ENCODE measurements at regions of chr2 and their contacts with region 1.

Region 1: DNA sequence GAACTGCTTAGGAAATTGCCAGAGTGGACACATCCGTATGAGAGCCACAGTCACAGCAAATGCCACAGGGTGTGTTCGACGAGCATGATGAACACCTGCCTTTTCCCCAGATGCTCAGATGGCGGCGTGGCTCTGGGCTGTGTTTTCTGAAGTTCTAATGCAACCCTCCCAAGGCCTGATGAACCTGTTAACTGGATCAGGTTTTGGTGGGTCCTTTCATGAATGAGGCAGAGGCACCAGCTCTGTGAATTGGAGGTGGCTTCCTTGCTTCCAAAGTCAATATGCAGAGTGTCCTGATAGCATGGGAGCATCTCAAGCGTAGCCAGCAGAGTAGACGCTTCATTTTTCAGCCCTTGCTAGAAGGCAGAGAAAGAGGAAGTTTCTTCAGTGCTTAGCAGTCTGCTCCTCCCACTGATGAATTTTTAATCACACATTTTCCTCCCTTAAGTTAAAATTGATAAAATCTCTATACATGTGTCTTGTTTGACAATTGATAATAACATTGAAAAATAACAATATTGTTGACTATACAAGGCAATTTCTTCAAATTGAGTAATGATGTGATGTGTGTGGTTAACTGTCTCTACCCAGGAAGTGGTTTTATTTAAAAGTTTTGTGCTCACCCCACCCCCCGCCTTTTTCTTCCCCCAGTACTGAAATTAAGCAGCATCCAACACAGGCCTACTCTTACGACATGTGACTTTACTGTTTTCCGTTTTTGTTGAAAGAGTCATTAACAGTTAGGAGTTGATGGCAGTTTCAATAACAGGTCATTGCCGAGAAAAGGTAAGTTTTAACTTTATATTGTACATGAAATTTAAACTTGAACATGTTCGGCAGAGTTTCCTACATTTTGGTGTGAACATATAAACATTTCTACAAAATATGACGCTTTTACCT is at the start of gene ARHGAP15:
- DNase-seq: peak; percentile 31 to 89 (median 83)
- ATAC-seq: peak; percentile 95
- H3K4me3 ChIP-seq: peak within 1 kb of the TSS; percentile 70
- H3K4me3 Mint-ChIP-seq: peak within 1 kb of the TSS; percentile 76 to 91 (median 82)
- H3K27ac ChIP-seq: peak within 1 kb of the TSS; percentile 84
- H3K27ac Mint-ChIP-seq: peak within 1 kb of the TSS in 5 of 9 donors; percentile 85 to 98 (median 98)
- H3K4me1 ChIP-seq: peaks cover 46 to 52% of the 10 kb centered on the region in 2 donors
- H3K4me1 Mint-ChIP-seq: peaks cover 20 to 39% (median 33%) of the 10 kb centered on the region in 7 donors
- H3K27me3 ChIP-seq: no peaks in the 10 kb centered on the region
- H3K27me3 Mint-ChIP-seq: no peaks in the 10 kb centered on the region
- total RNA-seq, gene ARHGAP15: 164 to 218 (median 183) TPM

Region 2: DNA sequence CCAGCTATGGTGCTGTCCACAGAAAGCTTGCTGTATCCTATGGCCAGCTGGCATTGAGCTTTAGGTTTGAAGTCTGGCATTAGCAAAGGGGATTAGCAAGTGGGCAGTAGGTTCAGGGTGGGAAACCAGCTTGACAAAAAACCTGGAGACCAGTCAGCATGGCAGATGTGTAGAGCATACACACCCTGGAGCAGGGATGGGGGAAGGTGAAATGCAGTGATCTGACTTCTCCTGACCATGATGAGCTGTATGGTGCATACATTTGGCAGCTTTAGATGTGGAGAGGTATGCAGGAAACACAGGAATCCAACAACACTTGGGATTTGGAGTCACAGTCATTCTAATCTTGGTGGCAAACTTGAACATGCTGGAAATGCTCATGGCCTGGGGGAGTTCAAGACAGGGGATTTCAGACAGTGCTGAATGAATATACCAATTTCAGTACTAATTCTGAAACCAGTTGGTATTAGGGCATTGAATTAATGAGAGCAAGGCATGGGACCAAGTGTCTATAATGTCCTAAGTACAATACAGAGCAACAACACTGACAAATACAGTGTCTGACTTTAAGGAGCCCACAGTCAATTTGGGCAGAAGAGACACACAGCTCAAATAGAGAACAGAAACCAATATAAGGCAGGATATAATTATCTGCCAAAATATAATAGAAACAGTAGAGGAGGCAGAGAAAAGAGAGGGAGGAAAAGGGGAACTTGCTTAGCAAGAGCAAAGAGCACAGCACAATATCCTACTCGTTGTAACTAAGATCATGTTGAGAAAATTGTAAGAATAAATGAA is 12.1 kb after region 1 on chr2:
- CTCF ChIA-PET with region 1: interaction called, 9 read pairs
- POLR2A ChIA-PET with region 1: interaction called, 95 read pairs
- intact Hi-C with region 1: loop called (anchors 1 kb)
- DNase-seq: no peak
- ATAC-seq: peak; percentile 61
- H3K4me3 ChIP-seq: no peak overlapping the region
- H3K4me3 Mint-ChIP-seq: peak overlapping the region; percentile 27 to 84 (median 78)
- H3K27ac ChIP-seq: peak overlapping the region; percentile 25
- H3K27ac Mint-ChIP-seq: peak overlapping the region in 8 of 9 donors; percentile 34 to 86 (median 82)
- H3K4me1 ChIP-seq: peaks cover 46 to 48% of the 10 kb centered on the region in 2 donors
- H3K4me1 Mint-ChIP-seq: peaks cover 80 to 100% (median 96%) of the 10 kb centered on the region in 7 donors
- H3K27me3 ChIP-seq: no peaks in the 10 kb centered on the region
- H3K27me3 Mint-ChIP-seq: no peaks in the 10 kb centered on the region

Region 3: GRCh38 chr2:143205106-143205764 is 76.3 kb after region 1 on chr2:
- CTCF ChIA-PET with region 1: interaction called, 3 read pairs
- POLR2A ChIA-PET with region 1: no interaction called
- intact Hi-C with region 1: loop called in 1 of 2 experiments (anchors 1 kb)
- DNase-seq: peak in 7 of 9 donors; percentile 13 to 58 (median 44)
- ATAC-seq: peak; percentile 77
- H3K4me3 ChIP-seq: no peak overlapping the region
- H3K4me3 Mint-ChIP-seq: peak overlapping the region in 6 of 10 donors; percentile 0 to 58 (median 16)
- H3K27ac ChIP-seq: no peak overlapping the region
- H3K27ac Mint-ChIP-seq: peak overlapping the region in 8 of 9 donors; percentile 10 to 90 (median 58)
- H3K4me1 ChIP-seq: peaks cover 28 to 34% of the 10 kb centered on the region in 2 donors
- H3K4me1 Mint-ChIP-seq: peaks cover 30 to 85% (median 78%) of the 10 kb centered on the region in 7 donors
- H3K27me3 ChIP-seq: no peaks in the 10 kb centered on the region
- H3K27me3 Mint-ChIP-seq: no peaks in the 10 kb centered on the region

Region 4: GRCh38 chr2:144183727-144184126 is 1054.8 kb after region 1 on chr2:
- CTCF ChIA-PET with region 1: no interaction called
- POLR2A ChIA-PET with region 1: no interaction called
- intact Hi-C with region 1: loop called in 1 of 2 experiments (anchors 10 kb)
- DNase-seq: peak; percentile 12 to 78 (median 71)
- ATAC-seq: peak; percentile 98
- H3K4me3 ChIP-seq: no peak overlapping the region
- H3K4me3 Mint-ChIP-seq: peak overlapping the region; percentile 37 to 87 (median 79)
- H3K27ac ChIP-seq: no peak overlapping the region
- H3K27ac Mint-ChIP-seq: peak overlapping the region in 8 of 9 donors; percentile 8 to 89 (median 60)
- H3K4me1 ChIP-seq: peaks cover 9 to 30% of the 10 kb centered on the region in 2 donors
- H3K4me1 Mint-ChIP-seq: peaks cover 9 to 26% (median 13%) of the 10 kb centered on the region in 7 donors
- H3K27me3 ChIP-seq: no peaks in the 10 kb centered on the region
- H3K27me3 Mint-ChIP-seq: no peaks in the 10 kb centered on the region

Region 5: GRCh38 chr2:144288438-144288837 is 1159.5 kb after region 1 on chr2:
- CTCF ChIA-PET with region 1: no interaction called
- POLR2A ChIA-PET with region 1: no interaction called
- intact Hi-C with region 1: no loop called
- DNase-seq: no peak
- ATAC-seq: no peak
- H3K4me3 ChIP-seq: no peak overlapping the region
- H3K4me3 Mint-ChIP-seq: no peak overlapping the region
- H3K27ac ChIP-seq: no peak overlapping the region
- H3K27ac Mint-ChIP-seq: no peak overlapping the region
- H3K4me1 ChIP-seq: no peaks in the 10 kb centered on the region
- H3K4me1 Mint-ChIP-seq: no peaks in the 10 kb centered on the region
- H3K27me3 ChIP-seq: no peaks in the 10 kb centered on the region
- H3K27me3 Mint-ChIP-seq: no peaks in the 10 kb centered on the region

Measured in naive thymus-derived CD4-positive, alpha-beta T cell (primary cell).